ENCODE measurements at regions of chr15 and their contacts with region 1.

Region 1: DNA sequence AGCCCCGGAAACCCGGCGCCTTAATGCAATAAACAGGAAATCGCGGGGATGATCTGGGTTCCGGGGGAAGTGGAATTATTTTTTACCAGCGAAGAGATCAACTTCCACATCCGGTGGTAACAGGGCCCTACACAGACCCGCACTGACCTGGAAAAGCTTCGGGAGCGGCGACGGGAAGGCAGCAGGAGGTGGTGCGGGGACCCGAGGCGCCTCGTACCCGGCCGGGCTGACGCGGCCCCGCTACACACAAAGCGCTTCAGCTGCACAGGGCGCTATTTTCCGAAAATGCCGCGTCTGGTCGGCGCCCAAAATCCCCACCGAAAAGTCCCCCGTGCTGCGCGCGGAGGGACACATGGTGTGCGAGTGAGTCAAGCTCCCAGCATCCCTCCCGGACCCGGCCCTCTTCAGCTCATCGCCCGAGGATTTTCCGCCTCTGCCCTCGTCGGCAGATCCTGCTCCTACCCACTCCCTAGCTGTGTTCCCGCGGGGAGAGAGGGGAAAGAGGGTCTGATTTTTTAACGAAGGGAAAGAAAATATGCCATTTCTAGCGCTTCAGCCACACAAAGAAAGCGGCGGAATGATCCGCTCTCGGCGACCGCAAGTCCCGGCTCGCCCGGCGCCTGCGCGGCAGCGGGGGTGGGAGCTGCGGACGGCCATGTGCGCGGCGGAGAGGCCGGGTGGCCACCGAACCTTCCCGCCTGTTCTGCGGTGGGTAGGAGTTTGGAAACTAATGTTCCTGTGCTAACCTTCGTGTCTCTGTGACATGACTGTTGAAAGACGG is at the start of gene GABPB1:
- DNase-seq: peak; percentile 94
- total RNA-seq, gene GABPB1: 12.0 TPM

Region 2: DNA sequence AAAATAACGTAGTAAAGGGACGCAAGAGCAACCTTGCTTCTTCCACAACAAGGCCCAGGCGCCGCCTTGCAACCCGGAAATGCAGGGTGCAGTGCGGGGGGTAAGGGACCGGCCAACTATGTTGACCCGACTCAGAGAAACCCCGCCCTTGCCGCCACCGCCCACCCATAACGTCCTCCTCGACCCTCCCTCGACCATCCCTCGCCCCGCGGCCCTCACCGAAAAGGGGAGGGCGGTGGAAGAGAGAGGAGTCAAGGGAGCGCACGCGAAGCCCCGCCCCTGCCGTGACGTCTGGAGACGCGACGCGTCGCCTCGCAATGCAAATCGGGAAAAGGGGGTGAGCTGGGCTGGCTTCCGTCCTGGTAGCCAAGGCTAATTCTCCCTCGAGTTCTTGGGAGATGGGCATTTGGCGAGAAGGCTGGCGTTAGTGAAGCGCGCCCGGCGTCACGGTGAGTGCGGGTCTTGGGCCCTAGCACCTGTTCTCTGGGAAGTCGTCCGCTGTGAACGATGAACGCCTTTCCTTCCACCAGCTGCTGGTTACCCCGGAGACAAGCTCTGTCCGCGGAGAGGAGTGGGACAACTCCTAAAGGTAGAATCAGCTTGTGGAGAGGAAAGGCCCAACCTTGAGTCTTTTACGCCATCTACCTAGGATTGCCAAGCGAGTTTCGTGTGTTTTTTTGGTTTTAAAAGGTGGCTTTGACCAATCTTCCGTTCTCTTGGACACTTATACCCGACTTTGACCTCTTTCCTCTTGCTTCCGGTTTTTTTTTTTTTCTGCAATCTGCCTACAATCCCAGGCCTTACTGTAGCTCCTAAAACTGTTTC is 69.2 kb after region 1 on chr15 and contains the start of gene USP8:
- intact Hi-C with region 1: loop called (anchors 1 kb)
- DNase-seq: peak; percentile 98
- total RNA-seq, gene USP8: 41.3 TPM

Region 3: DNA sequence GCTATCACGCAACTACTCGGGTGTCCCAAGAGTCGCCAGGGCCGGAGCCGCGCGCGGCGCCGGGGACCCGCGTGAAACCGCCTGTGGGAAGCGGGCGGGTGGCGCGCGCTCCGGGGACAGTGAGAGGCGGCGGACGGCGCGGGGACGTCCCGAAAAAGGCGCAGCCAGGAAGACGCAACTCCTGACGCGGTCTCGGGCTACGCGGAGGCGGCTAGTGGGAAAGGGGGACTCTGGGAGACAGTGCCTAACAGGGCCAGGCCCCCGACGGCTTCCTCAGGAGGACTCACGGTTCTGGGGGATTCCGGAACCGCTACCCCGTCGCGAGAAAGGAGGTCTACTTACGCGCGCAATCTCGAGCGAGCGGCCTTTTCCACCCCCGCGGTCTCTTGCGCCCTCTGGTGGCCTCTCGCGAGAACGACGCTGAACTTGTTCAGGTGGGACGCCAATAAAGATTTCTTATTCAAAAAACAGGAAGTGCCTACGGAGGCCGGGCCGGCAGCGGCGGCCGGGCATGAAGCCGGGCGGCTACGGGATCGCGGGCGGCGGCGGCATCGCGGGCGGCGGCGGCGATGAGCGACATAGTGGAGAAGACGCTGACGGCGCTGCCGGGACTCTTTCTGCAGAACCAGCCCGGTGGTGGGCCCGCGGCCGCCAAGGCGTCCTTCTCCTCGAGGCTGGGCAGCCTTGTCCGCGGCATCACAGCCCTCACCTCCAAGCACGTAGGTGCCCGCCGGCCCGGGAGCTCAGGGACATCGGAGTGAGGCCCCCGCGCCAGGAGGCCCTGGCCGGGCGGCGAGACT is 553.4 kb after region 1 on chr15 and contains the start of gene AP4E1:
- intact Hi-C with region 1: loop called (anchors 10 kb)
- DNase-seq: peak; percentile 97
- total RNA-seq, gene AP4E1: 9.9 TPM

Measured in cardiac septum (tissue), 1 donor.